Naive thymus-derived CD4-positive, alpha-beta T cell (primary cell): ENCODE measurements at regions of chr15 and their contacts with region 1.

Region 1: DNA sequence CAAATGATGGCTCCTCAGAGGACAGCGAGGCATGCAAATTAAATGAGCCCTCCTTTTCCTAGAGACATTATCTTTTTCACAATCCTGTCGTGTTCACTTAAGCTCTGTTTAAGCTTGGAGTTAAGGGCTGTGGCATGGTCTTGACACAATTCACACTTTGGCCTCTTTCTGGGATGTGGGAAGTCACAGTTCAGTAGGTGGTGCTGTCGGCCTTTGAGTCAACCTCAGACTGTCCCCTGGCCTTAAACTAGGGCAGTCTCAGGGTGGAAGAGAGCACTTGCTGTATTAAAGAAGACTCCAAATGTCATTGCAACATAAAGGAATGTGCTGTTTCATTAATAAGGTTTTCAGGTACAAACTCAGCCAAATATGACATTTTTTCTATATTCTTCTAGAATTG is 351.0 kb downstream of the MCTP2 start:
- DNase-seq: peak in 1 of 9 donors; percentile 46
- ATAC-seq: no peak
- H3K4me3 ChIP-seq: no peak overlapping the region
- H3K4me3 Mint-ChIP-seq: no peak overlapping the region
- H3K27ac ChIP-seq: no peak overlapping the region
- H3K27ac Mint-ChIP-seq: no peak overlapping the region
- H3K4me1 ChIP-seq: peaks cover 13 to 29% of the 10 kb centered on the region in 2 donors
- H3K4me1 Mint-ChIP-seq: peaks cover 17 to 58% (median 45%) of the 10 kb centered on the region in 7 donors
- H3K27me3 ChIP-seq: no peaks in the 10 kb centered on the region
- H3K27me3 Mint-ChIP-seq: peaks cover 53 to 85% (median 79%) of the 10 kb centered on the region in 5 donors

Region 2: GRCh38 chr15:94163999-94164807 is 418.2 kb before region 1 on chr15:
- CTCF ChIA-PET with region 1: no interaction called
- POLR2A ChIA-PET with region 1: no interaction called
- intact Hi-C with region 1: loop called in 1 of 2 experiments (anchors 2 kb)
- DNase-seq: peak in 8 of 9 donors; percentile 18 to 53 (median 35)
- ATAC-seq: peak; percentile 77
- H3K4me3 ChIP-seq: no peak overlapping the region
- H3K4me3 Mint-ChIP-seq: no peak overlapping the region
- H3K27ac ChIP-seq: no peak overlapping the region
- H3K27ac Mint-ChIP-seq: no peak overlapping the region
- H3K4me1 ChIP-seq: no peaks in the 10 kb centered on the region
- H3K4me1 Mint-ChIP-seq: peaks cover 0 to 9% (median 0%) of the 10 kb centered on the region in 7 donors
- H3K27me3 ChIP-seq: no peaks in the 10 kb centered on the region
- H3K27me3 Mint-ChIP-seq: peaks cover 0 to 30% (median 4%) of the 10 kb centered on the region in 5 donors

Region 3: GRCh38 chr15:94610069-94610468 is 27.7 kb after region 1 on chr15:
- CTCF ChIA-PET with region 1: no interaction called
- POLR2A ChIA-PET with region 1: no interaction called
- intact Hi-C with region 1: loop called in 1 of 2 experiments (anchors 1 kb)
- DNase-seq: no peak
- ATAC-seq: no peak
- H3K4me3 ChIP-seq: no peak overlapping the region
- H3K4me3 Mint-ChIP-seq: peak overlapping the region in 1 of 10 donors; percentile 27
- H3K27ac ChIP-seq: no peak overlapping the region
- H3K27ac Mint-ChIP-seq: no peak overlapping the region
- H3K4me1 ChIP-seq: no peaks in the 10 kb centered on the region
- H3K4me1 Mint-ChIP-seq: peaks cover 11 to 49% (median 14%) of the 10 kb centered on the region in 7 donors
- H3K27me3 ChIP-seq: peaks cover 0 to 3% of the 10 kb centered on the region in 2 donors
- H3K27me3 Mint-ChIP-seq: peaks cover 53 to 73% (median 63%) of the 10 kb centered on the region in 5 donors

Region 4: DNA sequence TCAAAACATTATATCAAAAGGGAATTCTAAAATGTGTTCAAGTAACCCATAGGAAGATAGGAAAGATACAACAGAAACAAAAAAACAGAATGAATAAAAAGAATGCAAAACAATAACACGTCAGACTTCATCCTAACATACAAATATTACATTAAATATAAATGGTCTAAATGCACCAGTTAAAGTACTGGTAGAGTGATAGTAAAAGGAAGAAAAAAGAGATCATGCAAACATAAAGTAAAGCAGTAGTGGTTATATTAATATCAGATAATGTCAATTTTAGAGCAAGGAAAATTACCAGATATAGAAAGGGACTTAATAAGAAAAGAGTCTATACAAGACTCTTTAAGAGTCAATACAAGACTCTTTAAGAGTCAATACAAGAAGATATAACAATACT is 404.7 kb after region 1 on chr15:
- CTCF ChIA-PET with region 1: no interaction called
- POLR2A ChIA-PET with region 1: no interaction called
- intact Hi-C with region 1: no loop called
- DNase-seq: no peak
- ATAC-seq: no peak
- H3K4me3 ChIP-seq: no peak overlapping the region
- H3K4me3 Mint-ChIP-seq: no peak overlapping the region
- H3K27ac ChIP-seq: no peak overlapping the region
- H3K27ac Mint-ChIP-seq: no peak overlapping the region
- H3K4me1 ChIP-seq: no peaks in the 10 kb centered on the region
- H3K4me1 Mint-ChIP-seq: no peaks in the 10 kb centered on the region
- H3K27me3 ChIP-seq: no peaks in the 10 kb centered on the region
- H3K27me3 Mint-ChIP-seq: peaks cover 0 to 5% (median 0%) of the 10 kb centered on the region in 5 donors

Region 5: GRCh38 chr15:95025924-95026728 is 443.8 kb after region 1 on chr15:
- CTCF ChIA-PET with region 1: no interaction called
- POLR2A ChIA-PET with region 1: no interaction called
- intact Hi-C with region 1: loop called in 1 of 2 experiments (anchors 10 kb)
- DNase-seq: peak in 1 of 9 donors; percentile 2
- ATAC-seq: no peak
- H3K4me3 ChIP-seq: no peak overlapping the region
- H3K4me3 Mint-ChIP-seq: no peak overlapping the region
- H3K27ac ChIP-seq: no peak overlapping the region
- H3K27ac Mint-ChIP-seq: no peak overlapping the region
- H3K4me1 ChIP-seq: no peaks in the 10 kb centered on the region
- H3K4me1 Mint-ChIP-seq: no peaks in the 10 kb centered on the region
- H3K27me3 ChIP-seq: no peaks in the 10 kb centered on the region
- H3K27me3 Mint-ChIP-seq: peaks cover 0 to 12% (median 7%) of the 10 kb centered on the region in 5 donors

Region 6: GRCh38 chr15:95291898-95292472 is 709.6 kb after region 1 on chr15:
- CTCF ChIA-PET with region 1: no interaction called
- POLR2A ChIA-PET with region 1: no interaction called
- intact Hi-C with region 1: loop called (anchors 1 to 5 kb)
- DNase-seq: peak in 3 of 9 donors; percentile 6 to 15 (median 13)
- ATAC-seq: no peak
- H3K4me3 ChIP-seq: no peak overlapping the region
- H3K4me3 Mint-ChIP-seq: no peak overlapping the region
- H3K27ac ChIP-seq: no peak overlapping the region
- H3K27ac Mint-ChIP-seq: no peak overlapping the region
- H3K4me1 ChIP-seq: no peaks in the 10 kb centered on the region
- H3K4me1 Mint-ChIP-seq: peaks cover 0 to 34% (median 0%) of the 10 kb centered on the region in 7 donors
- H3K27me3 ChIP-seq: no peaks in the 10 kb centered on the region
- H3K27me3 Mint-ChIP-seq: peaks cover 51 to 77% (median 64%) of the 10 kb centered on the region in 5 donors

Region 7: GRCh38 chr15:95864467-95864886 is 1282.1 kb after region 1 on chr15:
- CTCF ChIA-PET with region 1: no interaction called
- POLR2A ChIA-PET with region 1: no interaction called
- intact Hi-C with region 1: loop called in 1 of 2 experiments (anchors 10 kb)
- DNase-seq: no peak
- ATAC-seq: peak; percentile 60
- H3K4me3 ChIP-seq: no peak overlapping the region
- H3K4me3 Mint-ChIP-seq: peak overlapping the region in 1 of 10 donors; percentile 45
- H3K27ac ChIP-seq: no peak overlapping the region
- H3K27ac Mint-ChIP-seq: peak overlapping the region in 1 of 9 donors; percentile 82
- H3K4me1 ChIP-seq: peaks cover 0 to 7% of the 10 kb centered on the region in 2 donors
- H3K4me1 Mint-ChIP-seq: peaks cover under 1 to 43% (median 8%) of the 10 kb centered on the region in 7 donors
- H3K27me3 ChIP-seq: no peaks in the 10 kb centered on the region
- H3K27me3 Mint-ChIP-seq: peaks cover 0 to 67% (median 17%) of the 10 kb centered on the region in 5 donors

Region 8: GRCh38 chr15:96345560-96346399 is 1763.4 kb after region 1 on chr15:
- CTCF ChIA-PET with region 1: no interaction called
- POLR2A ChIA-PET with region 1: no interaction called
- intact Hi-C with region 1: loop called in 1 of 2 experiments (anchors 10 kb)
- DNase-seq: no peak
- ATAC-seq: peak; percentile 38
- H3K4me3 ChIP-seq: no peak overlapping the region
- H3K4me3 Mint-ChIP-seq: peak overlapping the region in 3 of 10 donors; percentile 5 to 43 (median 25)
- H3K27ac ChIP-seq: no peak overlapping the region
- H3K27ac Mint-ChIP-seq: peak overlapping the region in 1 of 9 donors; percentile 58
- H3K4me1 ChIP-seq: no peaks in the 10 kb centered on the region
- H3K4me1 Mint-ChIP-seq: peaks cover 4 to 27% (median 13%) of the 10 kb centered on the region in 7 donors
- H3K27me3 ChIP-seq: peaks cover 0 to 44% of the 10 kb centered on the region in 2 donors
- H3K27me3 Mint-ChIP-seq: peaks cover 92 to 99% (median 96%) of the 10 kb centered on the region in 5 donors